Calu3 (cell line): ENCODE measurements at regions of chr4 and their contacts with region 1.

Region 1: DNA sequence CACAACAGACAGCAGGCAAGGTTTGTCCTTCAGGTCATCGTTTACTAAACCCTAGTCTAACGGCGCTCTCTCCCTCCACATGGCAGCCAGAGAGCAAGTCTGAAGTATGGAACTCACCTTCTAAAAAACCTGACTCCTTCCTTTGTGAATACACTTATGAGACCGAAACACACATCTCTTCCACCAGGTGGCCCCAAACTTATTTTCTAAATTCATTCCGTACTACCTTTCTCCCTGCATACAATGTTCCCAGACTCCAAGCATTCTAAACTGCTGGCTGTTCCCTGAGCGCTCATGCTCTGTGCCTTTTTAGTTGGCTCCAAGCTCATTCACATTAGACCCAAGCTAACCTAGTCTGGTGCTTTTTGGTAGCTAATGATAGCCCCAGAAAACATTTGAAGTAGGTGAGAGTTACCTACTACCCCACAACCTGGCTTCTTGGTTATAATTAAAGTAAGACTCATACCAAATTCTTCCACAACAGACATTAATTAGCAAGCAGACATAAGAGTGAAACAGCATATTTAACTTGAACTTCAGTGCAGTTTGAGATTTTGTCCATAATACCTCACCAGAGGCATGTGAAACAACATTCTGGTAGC is 67.6 kb upstream of the DCLK2 start:
- DNase-seq: peak; percentile 24
- H3K4me3 Mint-ChIP-seq: no peak overlapping the region
- H3K27ac Mint-ChIP-seq: no peak overlapping the region
- H3K4me1 Mint-ChIP-seq: no peaks in the 10 kb centered on the region
- H3K27me3 Mint-ChIP-seq: no peaks in the 10 kb centered on the region
- CTCF ChIP-seq: no peak

Region 2: GRCh38 chr4:149409146-149409545 is 601.5 kb before region 1 on chr4:
- CTCF ChIA-PET with region 1: no interaction called
- intact Hi-C with region 1: loop called (anchors 5 kb)
- DNase-seq: peak; percentile 23
- H3K4me3 Mint-ChIP-seq: no peak overlapping the region
- H3K27ac Mint-ChIP-seq: peak overlapping the region; percentile 23
- H3K4me1 Mint-ChIP-seq: peaks cover 7% of the 10 kb centered on the region
- H3K27me3 Mint-ChIP-seq: no peaks in the 10 kb centered on the region
- CTCF ChIP-seq: no peak

Region 3: DNA sequence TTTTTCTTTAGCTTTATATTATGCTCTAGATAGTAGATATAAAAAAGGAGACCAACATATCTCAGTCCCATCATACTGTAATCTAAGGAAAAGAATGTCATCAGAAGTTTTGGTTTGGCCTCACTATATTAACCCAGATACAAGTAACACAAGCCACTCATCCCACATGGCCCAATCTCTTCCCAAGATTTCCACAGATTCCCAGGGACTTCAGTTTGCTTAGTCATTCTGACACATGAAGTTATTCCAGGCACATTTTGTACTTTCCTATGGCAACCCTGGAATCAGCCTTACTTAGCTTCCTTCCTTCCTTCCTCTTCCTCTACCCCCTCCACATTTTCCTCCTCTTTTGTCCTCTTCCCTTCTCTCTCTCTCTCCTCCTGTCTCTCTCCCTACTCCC is 45.9 kb after region 1 on chr4:
- CTCF ChIA-PET with region 1: no interaction called
- intact Hi-C with region 1: loop called (anchors 2 kb)
- DNase-seq: no peak
- H3K4me3 Mint-ChIP-seq: no peak overlapping the region
- H3K27ac Mint-ChIP-seq: no peak overlapping the region
- H3K4me1 Mint-ChIP-seq: no peaks in the 10 kb centered on the region
- H3K27me3 Mint-ChIP-seq: no peaks in the 10 kb centered on the region
- CTCF ChIP-seq: no peak

Region 4: GRCh38 chr4:150209140-150209829 is 198.7 kb after region 1 on chr4:
- CTCF ChIA-PET with region 1: interaction called, 13 read pairs
- intact Hi-C with region 1: loop called (anchors 1 kb)
- DNase-seq: peak; percentile 66
- H3K4me3 Mint-ChIP-seq: no peak overlapping the region
- H3K27ac Mint-ChIP-seq: no peak overlapping the region
- H3K4me1 Mint-ChIP-seq: no peaks in the 10 kb centered on the region
- H3K27me3 Mint-ChIP-seq: peaks cover 14% of the 10 kb centered on the region
- CTCF ChIP-seq: no peak

Region 5: DNA sequence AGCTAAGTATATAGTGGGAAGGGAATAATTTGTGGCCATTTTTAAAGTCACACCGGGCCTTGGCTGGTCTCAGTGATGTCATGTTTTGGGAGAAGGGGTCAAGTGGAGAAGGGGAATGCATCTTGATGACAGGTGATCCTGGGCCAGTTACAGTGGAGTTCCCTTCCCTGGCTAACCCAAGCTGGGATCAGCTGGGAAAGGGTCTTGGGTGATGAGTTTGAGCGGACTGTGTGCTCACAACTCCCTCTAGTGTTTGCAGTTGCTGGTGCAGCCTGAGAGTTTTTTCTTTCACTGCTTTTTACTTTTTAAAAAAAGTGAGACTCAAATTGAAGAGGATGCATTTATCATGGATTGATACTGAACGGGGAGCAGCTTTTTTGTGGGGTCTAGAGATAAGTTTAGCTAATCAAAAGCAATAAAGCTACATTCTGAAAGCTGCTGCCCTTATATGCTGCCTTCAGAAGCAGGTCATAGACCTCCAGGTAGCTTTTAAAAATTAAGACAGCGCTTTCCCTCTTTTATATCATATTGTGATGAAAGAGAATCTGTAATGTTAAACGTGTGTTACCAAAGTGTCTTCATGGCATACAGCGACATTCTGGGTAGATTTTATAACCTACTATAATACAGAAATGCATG is 232.3 kb after region 1 on chr4:
- CTCF ChIA-PET with region 1: interaction called, 4 read pairs
- intact Hi-C with region 1: loop called (anchors 5 kb)
- DNase-seq: peak; percentile 18
- H3K4me3 Mint-ChIP-seq: no peak overlapping the region
- H3K27ac Mint-ChIP-seq: no peak overlapping the region
- H3K4me1 Mint-ChIP-seq: no peaks in the 10 kb centered on the region
- H3K27me3 Mint-ChIP-seq: no peaks in the 10 kb centered on the region
- CTCF ChIP-seq: peak; percentile 42

Region 6: GRCh38 chr4:150867148-150867547 is 856.5 kb after region 1 on chr4:
- CTCF ChIA-PET with region 1: no interaction called
- intact Hi-C with region 1: loop called (anchors 5 kb)
- DNase-seq: peak; percentile 39
- H3K4me3 Mint-ChIP-seq: no peak overlapping the region
- H3K27ac Mint-ChIP-seq: no peak overlapping the region
- H3K4me1 Mint-ChIP-seq: no peaks in the 10 kb centered on the region
- H3K27me3 Mint-ChIP-seq: no peaks in the 10 kb centered on the region
- CTCF ChIP-seq: no peak